ENCODE measurements at regions of chr2 and their contacts with region 1.

Region 1: GRCh38 chr2:241049739-241050623 is 51.6 kb downstream of the SNED1 start:
- DNase-seq: no peak
- H3K4me3 ChIP-seq: no peak overlapping the region
- H3K27ac ChIP-seq: no peak overlapping the region
- H3K4me1 ChIP-seq: no peaks in the 10 kb centered on the region
- H3K27me3 ChIP-seq: no peaks in the 10 kb centered on the region
- CTCF ChIP-seq: no peak

Region 2: GRCh38 chr2:240946654-240947053 is 103.3 kb before region 1 on chr2:
- CTCF ChIA-PET with region 1: no interaction called
- dilution Hi-C with region 1: loop called (anchors 5 kb)
- in situ Hi-C with region 1: no loop called
- intact Hi-C with region 1: no loop called
- DNase-seq: peak; percentile 77
- H3K4me3 ChIP-seq: no peak overlapping the region
- H3K27ac ChIP-seq: no peak overlapping the region
- H3K4me1 ChIP-seq: peaks cover 21% of the 10 kb centered on the region
- H3K27me3 ChIP-seq: no peaks in the 10 kb centered on the region
- CTCF ChIP-seq: no peak

Region 3: DNA sequence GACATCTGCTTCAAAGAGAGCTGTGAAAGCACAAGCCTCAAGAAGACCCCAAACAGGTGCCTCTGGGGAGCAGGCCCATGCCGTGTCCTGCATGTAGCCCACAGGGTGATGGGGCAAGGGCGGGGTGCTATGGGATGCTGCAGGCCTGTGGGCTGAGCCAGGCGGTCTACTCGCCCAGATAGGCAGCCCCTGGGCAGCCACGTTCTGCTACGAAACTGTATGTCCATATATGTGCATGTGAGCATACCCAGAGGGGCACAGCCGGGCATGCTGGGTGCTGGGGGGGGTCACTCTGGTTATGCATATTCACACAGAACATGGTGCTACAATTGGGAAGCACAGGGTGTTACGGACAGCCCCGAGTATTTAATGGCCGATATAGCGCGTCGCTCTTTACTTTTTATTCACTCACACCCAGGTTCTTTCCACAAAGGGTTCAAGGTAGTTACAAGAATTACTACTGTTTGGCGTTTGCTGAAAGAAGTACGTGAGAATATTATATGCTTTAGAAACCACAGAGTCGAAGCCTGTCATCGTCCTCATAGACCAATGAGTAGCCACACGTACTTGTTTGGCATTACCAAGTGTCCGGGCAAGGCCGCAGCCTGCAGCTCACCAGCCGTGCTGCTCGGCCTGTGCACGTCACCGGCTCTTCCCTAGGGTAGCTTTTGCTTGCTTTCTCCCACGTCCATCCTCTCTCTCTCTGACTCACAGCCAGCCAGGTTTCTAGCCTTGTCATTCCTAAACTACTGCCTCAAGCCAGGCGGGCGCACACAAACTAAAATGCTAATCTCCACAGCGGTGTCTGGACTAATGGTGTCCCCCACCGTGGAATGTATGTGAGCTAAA is 37.7 kb after region 1 on chr2:
- CTCF ChIA-PET with region 1: no interaction called
- dilution Hi-C with region 1: no loop called
- in situ Hi-C with region 1: no loop called
- intact Hi-C with region 1: no loop called
- DNase-seq: no peak
- H3K4me3 ChIP-seq: no peak overlapping the region
- H3K27ac ChIP-seq: no peak overlapping the region
- H3K4me1 ChIP-seq: no peaks in the 10 kb centered on the region
- H3K27me3 ChIP-seq: no peaks in the 10 kb centered on the region
- CTCF ChIP-seq: no peak

Region 4: DNA sequence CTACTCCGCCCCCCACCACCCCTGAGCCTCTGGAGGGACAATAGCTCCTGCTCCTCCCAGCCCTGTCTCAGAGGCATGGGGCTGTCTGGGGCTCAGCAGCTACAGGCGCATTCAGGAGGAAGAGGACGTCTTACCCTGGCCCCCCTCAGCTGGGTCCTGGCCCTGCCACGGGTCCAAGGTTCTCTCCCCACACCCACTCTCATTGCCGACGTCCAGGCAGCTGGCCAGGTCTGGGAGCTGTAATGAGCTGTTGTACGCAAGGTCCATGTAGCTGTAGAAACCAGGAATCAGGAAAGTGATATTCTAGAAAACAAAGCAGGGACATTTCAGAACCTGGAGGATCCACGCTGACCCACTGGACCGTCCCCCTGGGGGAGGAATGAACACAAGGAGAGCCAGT is 85.8 kb after region 1 on chr2:
- CTCF ChIA-PET with region 1: no interaction called
- dilution Hi-C with region 1: no loop called
- in situ Hi-C with region 1: no loop called
- intact Hi-C with region 1: no loop called
- DNase-seq: no peak
- H3K4me3 ChIP-seq: no peak overlapping the region
- H3K27ac ChIP-seq: no peak overlapping the region
- H3K4me1 ChIP-seq: no peaks in the 10 kb centered on the region
- H3K27me3 ChIP-seq: no peaks in the 10 kb centered on the region
- CTCF ChIP-seq: no peak

Region 5: GRCh38 chr2:241149925-241150659 is 100.1 kb after region 1 on chr2 and contains the start of gene PPP1R7:
- CTCF ChIA-PET with region 1: no interaction called
- dilution Hi-C with region 1: no loop called
- in situ Hi-C with region 1: no loop called
- intact Hi-C with region 1: no loop called
- DNase-seq: peak; percentile 94
- H3K4me3 ChIP-seq: peak within 1 kb of the TSS; percentile 69 to 85 (median 80)
- H3K27ac ChIP-seq: peak within 1 kb of the TSS; percentile 56
- H3K4me1 ChIP-seq: peaks cover 22% of the 10 kb centered on the region
- H3K27me3 ChIP-seq: no peaks in the 10 kb centered on the region
- CTCF ChIP-seq: no peak
- total RNA-seq, gene PPP1R7: 39.2 to 66.5 TPM